CD4-positive, alpha-beta memory T cell (primary cell): ENCODE measurements at regions of chr16 and their contacts with region 1.

Region 1: DNA sequence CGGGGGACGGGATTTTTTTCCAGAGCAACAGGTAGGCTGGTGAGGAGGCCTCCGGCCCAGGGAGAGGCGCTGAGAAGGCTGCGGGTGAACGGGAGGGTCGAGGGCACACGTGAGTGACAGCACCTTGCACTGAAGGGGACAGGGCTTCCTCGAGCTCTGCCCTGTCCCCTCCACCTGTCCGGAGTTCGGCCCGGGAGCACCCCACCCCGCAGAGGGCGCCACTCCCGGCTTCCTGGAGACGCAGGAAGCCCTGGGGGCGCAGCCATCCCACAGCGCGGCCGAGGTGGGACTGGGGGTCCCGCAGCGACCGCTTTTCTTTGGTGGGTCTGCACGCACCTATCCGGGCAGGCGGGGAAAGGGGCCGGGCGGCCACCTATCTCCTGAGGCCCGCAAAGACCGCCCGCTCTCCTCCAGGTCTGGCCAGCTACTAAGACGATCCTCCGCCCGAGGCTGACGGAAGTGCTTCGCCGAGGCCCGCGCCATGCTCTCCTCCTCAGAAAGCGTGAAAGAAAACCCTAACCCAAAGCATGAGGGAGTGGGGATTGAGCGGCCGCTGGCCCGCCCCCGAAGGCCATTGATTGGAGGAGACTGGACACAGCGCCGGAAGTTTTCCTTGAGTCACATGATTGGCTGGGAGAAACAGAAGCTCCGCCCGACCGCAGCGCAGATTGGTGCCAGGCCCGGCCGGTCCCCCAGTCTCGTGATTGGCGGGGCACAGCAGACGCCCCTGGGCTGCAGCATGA is 34.3 kb downstream of the DDX19A start:
- DNase-seq: peak; percentile 94 to 97 (median 95)
- H3K4me3 ChIP-seq: peak overlapping the region; percentile 76 to 82
- H3K4me3 Mint-ChIP-seq: peak overlapping the region; percentile 92 to 99 (median 96)
- H3K27ac ChIP-seq: peak overlapping the region; percentile 66
- H3K27ac Mint-ChIP-seq: peak overlapping the region; percentile 90 to 99 (median 98)
- H3K4me1 ChIP-seq: peaks cover 19% of the 10 kb centered on the region
- H3K4me1 Mint-ChIP-seq: peaks cover 5 to 38% (median 13%) of the 10 kb centered on the region in 4 donors
- H3K27me3 ChIP-seq: no peaks in the 10 kb centered on the region
- H3K27me3 Mint-ChIP-seq: no peaks in the 10 kb centered on the region

Region 2: DNA sequence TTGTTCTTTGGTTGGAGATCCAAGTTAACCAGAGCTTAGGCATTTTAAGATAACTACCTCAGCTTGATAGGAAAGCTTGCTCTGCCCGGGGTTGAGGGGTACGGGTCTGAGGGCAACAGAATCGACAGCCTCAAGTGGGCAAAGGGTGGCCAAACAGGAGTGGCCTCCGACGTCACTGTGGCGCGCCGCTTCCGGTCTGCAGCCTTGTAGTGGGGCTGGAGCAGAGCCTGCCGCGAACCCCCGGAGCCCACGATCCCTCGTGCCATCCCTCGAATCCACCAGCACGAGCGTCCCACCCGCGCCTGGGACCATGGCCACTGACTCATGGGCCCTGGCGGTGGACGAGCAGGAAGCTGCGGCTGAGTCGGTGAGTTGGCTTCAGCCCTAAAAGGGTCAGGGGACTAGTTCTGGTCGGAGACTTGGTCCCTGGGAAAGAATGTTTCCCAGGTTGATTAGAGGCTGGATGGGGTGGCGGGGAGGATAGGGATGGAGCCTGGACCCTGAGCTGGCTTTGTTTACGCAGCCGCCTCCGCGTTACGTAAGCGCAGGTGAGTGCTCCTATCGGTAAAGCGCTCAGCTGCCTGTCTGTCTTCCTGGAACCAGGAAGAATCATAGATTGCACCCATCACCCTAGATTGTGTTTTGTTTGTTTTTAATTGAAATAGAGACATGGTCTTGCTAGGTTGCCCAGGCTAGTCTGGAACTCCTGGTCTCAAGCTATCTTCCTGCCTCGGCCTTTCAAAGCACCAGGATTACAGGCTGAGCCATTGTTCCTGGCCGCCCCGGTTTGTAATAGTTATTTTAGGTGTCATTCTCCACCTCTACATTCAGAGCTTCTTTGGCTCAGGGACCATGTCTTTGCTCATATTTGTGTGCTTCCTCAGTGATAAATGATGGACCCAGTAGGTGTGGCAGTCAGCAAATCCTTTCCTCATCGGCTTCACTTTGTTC is 81.8 kb before region 1 on chr16 and contains the start of gene DDX19B:
- CTCF ChIA-PET with region 1: no interaction called
- POLR2A ChIA-PET with region 1: interaction called, 11 read pairs
- intact Hi-C with region 1: no loop called
- DNase-seq: peak; percentile 42 to 67 (median 57)
- H3K4me3 ChIP-seq: peak within 1 kb of the TSS; percentile 88 to 98
- H3K4me3 Mint-ChIP-seq: peak within 1 kb of the TSS; percentile 93 to 98 (median 96)
- H3K27ac ChIP-seq: peak within 1 kb of the TSS; percentile 93
- H3K27ac Mint-ChIP-seq: peak within 1 kb of the TSS; percentile 95 to 99 (median 99)
- H3K4me1 ChIP-seq: peaks cover 30% of the 10 kb centered on the region
- H3K4me1 Mint-ChIP-seq: peaks cover 26 to 49% (median 37%) of the 10 kb centered on the region in 4 donors
- H3K27me3 ChIP-seq: no peaks in the 10 kb centered on the region
- H3K27me3 Mint-ChIP-seq: no peaks in the 10 kb centered on the region
- total RNA-seq, gene DDX19B: 26.9 to 28.7 TPM

Region 3: DNA sequence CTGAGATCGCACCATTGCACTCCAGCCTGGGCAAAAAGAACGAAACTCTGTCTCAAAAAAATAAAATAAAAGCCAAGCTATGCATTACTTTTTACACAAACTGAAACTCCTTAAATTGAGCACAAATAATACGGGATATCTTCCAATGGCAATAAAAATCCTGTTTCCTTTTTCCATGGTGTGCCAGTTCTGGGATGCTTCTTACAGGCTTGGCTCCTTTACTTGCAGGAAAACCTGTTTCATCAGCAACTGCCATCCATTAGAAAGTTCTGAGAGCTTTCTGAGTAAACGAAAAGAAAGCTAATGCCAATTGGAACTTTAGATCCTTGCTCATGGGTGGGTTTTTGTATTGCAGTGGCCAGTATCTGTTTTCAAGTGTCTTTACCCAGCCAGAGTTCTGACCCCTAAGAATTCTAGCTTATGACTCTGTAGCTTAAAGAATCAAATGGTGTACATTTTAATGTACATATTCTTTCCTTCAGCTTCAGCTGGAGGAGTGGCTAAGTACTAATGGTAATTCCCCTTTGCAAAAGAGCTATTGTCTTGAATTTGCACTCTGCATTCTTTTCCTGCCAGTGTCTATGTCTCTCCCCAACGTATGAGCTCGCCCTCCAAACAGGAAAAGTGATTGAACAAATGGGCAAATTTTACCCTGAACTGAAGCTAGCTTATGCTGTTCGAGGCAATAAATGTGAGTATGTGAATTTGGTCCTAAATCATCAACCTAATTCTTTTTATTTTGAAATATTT is 55.9 kb before region 1 on chr16:
- CTCF ChIA-PET with region 1: no interaction called
- POLR2A ChIA-PET with region 1: no interaction called
- intact Hi-C with region 1: no loop called
- DNase-seq: no peak
- H3K4me3 ChIP-seq: no peak overlapping the region
- H3K4me3 Mint-ChIP-seq: no peak overlapping the region
- H3K27ac ChIP-seq: no peak overlapping the region
- H3K27ac Mint-ChIP-seq: peak overlapping the region in 1 of 7 donors; percentile 19
- H3K4me1 ChIP-seq: no peaks in the 10 kb centered on the region
- H3K4me1 Mint-ChIP-seq: no peaks in the 10 kb centered on the region
- H3K27me3 ChIP-seq: no peaks in the 10 kb centered on the region
- H3K27me3 Mint-ChIP-seq: no peaks in the 10 kb centered on the region

Region 4: GRCh38 chr16:70364399-70364798 is 16.6 kb before region 1 on chr16:
- CTCF ChIA-PET with region 1: interaction called, 18 read pairs
- POLR2A ChIA-PET with region 1: interaction called, 22 read pairs
- intact Hi-C with region 1: no loop called
- DNase-seq: no peak
- H3K4me3 ChIP-seq: no peak overlapping the region
- H3K4me3 Mint-ChIP-seq: no peak overlapping the region
- H3K27ac ChIP-seq: no peak overlapping the region
- H3K27ac Mint-ChIP-seq: peak overlapping the region in 1 of 7 donors; percentile 30
- H3K4me1 ChIP-seq: no peaks in the 10 kb centered on the region
- H3K4me1 Mint-ChIP-seq: peaks cover 0 to 1% (median 0%) of the 10 kb centered on the region in 4 donors
- H3K27me3 ChIP-seq: no peaks in the 10 kb centered on the region
- H3K27me3 Mint-ChIP-seq: no peaks in the 10 kb centered on the region

Region 5: GRCh38 chr16:70402916-70403659 is 22.1 kb after region 1 on chr16:
- CTCF ChIA-PET with region 1: no interaction called
- POLR2A ChIA-PET with region 1: interaction called, 12 read pairs
- intact Hi-C with region 1: loop called (anchors 1 kb)
- DNase-seq: no peak
- H3K4me3 ChIP-seq: no peak overlapping the region
- H3K4me3 Mint-ChIP-seq: peak overlapping the region in 3 of 8 donors; percentile 26 to 41 (median 36)
- H3K27ac ChIP-seq: no peak overlapping the region
- H3K27ac Mint-ChIP-seq: peak overlapping the region in 6 of 7 donors; percentile 7 to 93 (median 78)
- H3K4me1 ChIP-seq: peaks cover 28% of the 10 kb centered on the region
- H3K4me1 Mint-ChIP-seq: peaks cover 28 to 59% (median 41%) of the 10 kb centered on the region in 4 donors
- H3K27me3 ChIP-seq: no peaks in the 10 kb centered on the region
- H3K27me3 Mint-ChIP-seq: no peaks in the 10 kb centered on the region

Region 6: GRCh38 chr16:70454222-70455034 is 73.4 kb after region 1 on chr16 and contains the start of gene FCSK:
- CTCF ChIA-PET with region 1: interaction called, 14 read pairs
- POLR2A ChIA-PET with region 1: interaction called, 48 read pairs
- intact Hi-C with region 1: loop called (anchors 1 kb)
- DNase-seq: peak; percentile 74 to 89 (median 85)
- H3K4me3 ChIP-seq: peak within 1 kb of the TSS; percentile 74 to 98
- H3K4me3 Mint-ChIP-seq: peak within 1 kb of the TSS; percentile 89 to 96 (median 91)
- H3K27ac ChIP-seq: peak within 1 kb of the TSS; percentile 91
- H3K27ac Mint-ChIP-seq: peak within 1 kb of the TSS; percentile 88 to 95 (median 92)
- H3K4me1 ChIP-seq: peaks cover 21% of the 10 kb centered on the region
- H3K4me1 Mint-ChIP-seq: peaks cover 16 to 22% (median 20%) of the 10 kb centered on the region in 4 donors
- H3K27me3 ChIP-seq: no peaks in the 10 kb centered on the region
- H3K27me3 Mint-ChIP-seq: peaks cover 0 to 2% of the 10 kb centered on the region in 2 donors
- total RNA-seq, gene FCSK: 41.7 to 42.8 TPM

Region 7: GRCh38 chr16:70594576-70594975 is 213.5 kb after region 1 on chr16:
- CTCF ChIA-PET with region 1: no interaction called
- POLR2A ChIA-PET with region 1: no interaction called
- intact Hi-C with region 1: no loop called
- DNase-seq: no peak
- H3K4me3 ChIP-seq: no peak overlapping the region
- H3K4me3 Mint-ChIP-seq: no peak overlapping the region
- H3K27ac ChIP-seq: no peak overlapping the region
- H3K27ac Mint-ChIP-seq: no peak overlapping the region
- H3K4me1 ChIP-seq: no peaks in the 10 kb centered on the region
- H3K4me1 Mint-ChIP-seq: no peaks in the 10 kb centered on the region
- H3K27me3 ChIP-seq: no peaks in the 10 kb centered on the region
- H3K27me3 Mint-ChIP-seq: no peaks in the 10 kb centered on the region

Region 8: GRCh38 chr16:71894921-71895678 is 1514.1 kb after region 1 on chr16 and contains the start of gene IST1:
- CTCF ChIA-PET with region 1: no interaction called
- POLR2A ChIA-PET with region 1: no interaction called
- intact Hi-C with region 1: loop called (anchors 2 kb)
- DNase-seq: peak; percentile 97 to 98 (median 97)
- H3K4me3 ChIP-seq: peak within 1 kb of the TSS; percentile 95 to 99
- H3K4me3 Mint-ChIP-seq: peak within 1 kb of the TSS; percentile 93 to 98 (median 96)
- H3K27ac ChIP-seq: peak within 1 kb of the TSS; percentile 90
- H3K27ac Mint-ChIP-seq: peak within 1 kb of the TSS; percentile 96 to 99 (median 98)
- H3K4me1 ChIP-seq: peaks cover 44% of the 10 kb centered on the region
- H3K4me1 Mint-ChIP-seq: peaks cover 10 to 51% (median 25%) of the 10 kb centered on the region in 4 donors
- H3K27me3 ChIP-seq: no peaks in the 10 kb centered on the region
- H3K27me3 Mint-ChIP-seq: no peaks in the 10 kb centered on the region
- total RNA-seq, gene IST1: 282 to 287 TPM